ENCODE measurements at regions of chr17 and their contacts with region 1.

Region 1: DNA sequence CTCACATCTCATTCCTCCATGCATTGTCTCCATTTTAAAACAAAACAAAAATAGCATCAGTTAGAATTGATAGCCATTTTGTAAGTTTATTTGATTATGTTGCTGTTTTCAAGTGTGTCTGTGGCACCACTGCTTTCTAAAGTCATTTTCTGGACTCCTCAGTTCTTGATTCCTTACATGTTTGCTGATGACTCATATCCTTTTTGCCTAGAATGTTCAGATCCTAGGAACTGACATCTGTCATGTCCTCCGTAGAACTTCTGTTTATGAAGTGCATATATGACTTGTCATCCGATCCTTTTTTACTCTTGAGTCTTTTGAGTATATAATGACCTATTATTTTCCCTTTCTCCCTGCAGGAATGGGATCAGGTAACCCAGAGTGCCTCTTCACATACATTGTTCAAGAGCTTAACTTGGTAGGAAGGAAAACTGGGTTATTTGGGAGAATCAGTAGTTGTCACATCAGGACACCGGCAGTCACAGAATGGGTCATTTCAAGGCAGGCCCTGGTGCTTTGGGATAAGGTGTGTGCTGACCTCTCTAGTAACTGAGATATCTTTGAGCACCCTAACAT is 69.2 kb downstream of the MAP2K4 start:
- DNase-seq: no peak
- ATAC-seq: no peak
- H3K4me3 Mint-ChIP-seq: no peak overlapping the region
- H3K27ac Mint-ChIP-seq: no peak overlapping the region
- H3K4me1 Mint-ChIP-seq: peaks cover 23% of the 10 kb centered on the region
- H3K27me3 Mint-ChIP-seq: no peaks in the 10 kb centered on the region

Region 2: DNA sequence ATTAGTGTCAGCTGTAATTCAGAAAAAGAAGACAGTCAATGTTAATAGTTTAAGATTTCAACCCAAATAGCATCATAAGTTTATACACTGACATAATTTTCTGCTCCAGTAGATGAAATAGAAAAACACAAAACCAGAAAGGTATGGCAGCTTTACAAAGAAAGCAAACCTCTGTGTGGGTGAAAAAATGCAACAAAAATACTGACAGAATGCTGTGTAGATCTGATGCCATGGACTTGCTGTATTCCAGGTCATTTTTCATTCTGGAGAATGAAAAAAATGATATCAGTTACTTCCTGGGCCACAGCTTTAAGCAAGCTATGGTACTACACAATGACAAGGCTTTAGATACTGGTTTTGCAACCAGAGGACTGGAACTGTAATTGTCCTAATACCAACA is 46.7 kb after region 1 on chr17:
- CTCF ChIA-PET with region 1: no interaction called
- POLR2A ChIA-PET with region 1: no interaction called
- intact Hi-C with region 1: loop called in 1 of 2 experiments (anchors 5 kb)
- DNase-seq: no peak
- ATAC-seq: no peak
- H3K4me3 Mint-ChIP-seq: no peak overlapping the region
- H3K27ac Mint-ChIP-seq: no peak overlapping the region
- H3K4me1 Mint-ChIP-seq: no peaks in the 10 kb centered on the region
- H3K27me3 Mint-ChIP-seq: no peaks in the 10 kb centered on the region

Region 3: DNA sequence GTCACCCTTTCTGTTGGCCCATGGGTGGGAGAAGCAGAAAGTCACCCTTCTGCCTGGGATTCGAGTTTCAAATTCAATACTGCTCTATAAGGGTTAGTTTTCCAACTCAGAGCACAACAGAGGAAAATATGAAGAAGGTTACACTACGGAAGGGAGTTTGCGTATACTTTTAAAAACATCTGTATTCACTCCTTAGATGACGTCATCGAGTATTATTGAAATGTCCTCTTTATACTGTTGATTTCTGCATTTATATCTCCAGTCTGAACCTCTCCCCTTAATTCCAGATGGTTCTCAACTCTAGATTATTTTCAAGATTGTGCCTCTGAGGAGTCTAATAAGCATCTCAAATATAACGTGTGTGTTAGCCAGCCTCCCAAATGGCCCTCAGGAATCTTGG is 179.8 kb after region 1 on chr17:
- CTCF ChIA-PET with region 1: no interaction called
- POLR2A ChIA-PET with region 1: no interaction called
- intact Hi-C with region 1: no loop called
- DNase-seq: no peak
- ATAC-seq: no peak
- H3K4me3 Mint-ChIP-seq: no peak overlapping the region
- H3K27ac Mint-ChIP-seq: no peak overlapping the region
- H3K4me1 Mint-ChIP-seq: no peaks in the 10 kb centered on the region
- H3K27me3 Mint-ChIP-seq: no peaks in the 10 kb centered on the region

Measured in activated CD4-positive, alpha-beta T cell treated with anti-CD3 and anti-CD28 coated beads for 36 hours (primary cell).